Ascending aorta (tissue), 2 donors: ENCODE measurements at regions of chr6 and their contacts with region 1.

Region 1: GRCh38 chr6:17086469-17086868 is 15.4 kb upstream of the STMND1 start:
- DNase-seq: no peak
- H3K4me3 ChIP-seq: no peak overlapping the region
- H3K27ac ChIP-seq: no peak overlapping the region
- H3K4me1 ChIP-seq: no peaks in the 10 kb centered on the region
- H3K27me3 ChIP-seq: no peaks in the 10 kb centered on the region
- CTCF ChIP-seq: peak; percentile 51 to 61 (median 55)

Region 2: GRCh38 chr6:16514249-16514648 is 572.2 kb before region 1 on chr6:
- intact Hi-C with region 1: loop called (anchors 10 kb)
- DNase-seq: no peak
- H3K4me3 ChIP-seq: no peak overlapping the region
- H3K27ac ChIP-seq: no peak overlapping the region
- H3K4me1 ChIP-seq: peaks cover 3 to 20% of the 10 kb centered on the region in 2 donors
- H3K27me3 ChIP-seq: no peaks in the 10 kb centered on the region
- CTCF ChIP-seq: peak; percentile 37 to 54 (median 44)

Region 3: DNA sequence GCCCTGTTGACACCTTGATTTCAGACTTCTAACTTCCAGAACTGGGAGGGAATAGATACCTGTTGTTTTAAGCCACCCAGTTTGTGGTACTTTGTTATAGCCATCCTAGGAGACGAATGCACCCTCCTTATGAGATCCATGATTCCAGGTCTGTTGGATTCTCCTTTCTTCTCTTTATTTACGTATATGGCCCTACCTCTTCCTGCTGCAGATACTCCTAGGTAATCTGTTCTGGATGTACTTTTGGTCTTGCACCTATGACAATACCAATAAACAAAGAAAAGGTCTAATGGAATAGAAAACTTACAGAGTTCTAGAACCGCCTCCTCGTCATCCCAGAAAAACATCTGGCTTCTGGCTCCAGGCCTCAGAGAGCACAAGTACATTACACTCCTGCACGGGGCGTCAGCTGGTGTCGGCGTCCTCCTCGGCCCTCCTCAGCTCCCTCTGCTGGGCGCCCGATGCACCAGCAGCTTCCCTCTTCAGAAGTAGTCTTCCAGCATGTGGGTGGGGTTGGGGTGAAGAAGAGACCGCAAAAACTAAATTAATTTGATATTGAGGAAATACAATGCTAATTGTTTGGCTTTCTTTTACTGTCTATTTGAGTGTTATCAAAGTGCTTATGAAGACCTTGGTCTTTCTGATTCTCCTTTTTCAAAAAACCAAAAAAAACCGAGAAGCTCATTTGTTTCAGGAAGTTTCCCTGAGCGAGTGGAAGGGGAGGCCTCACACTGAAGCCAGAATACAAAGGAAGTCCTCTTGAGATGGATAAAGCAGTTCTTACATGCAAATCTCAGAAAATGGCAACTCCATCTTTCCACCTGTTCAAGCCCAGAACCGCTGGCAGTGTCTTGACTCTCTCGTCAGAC is 315.5 kb before region 1 on chr6:
- intact Hi-C with region 1: loop called (anchors 10 kb)
- DNase-seq: peak; percentile 22 to 86
- H3K4me3 ChIP-seq: no peak overlapping the region
- H3K27ac ChIP-seq: peak overlapping the region; percentile 32 to 51
- H3K4me1 ChIP-seq: peaks cover 6 to 25% of the 10 kb centered on the region in 2 donors
- H3K27me3 ChIP-seq: no peaks in the 10 kb centered on the region
- CTCF ChIP-seq: peak; percentile 79 to 90 (median 87)

Region 4: DNA sequence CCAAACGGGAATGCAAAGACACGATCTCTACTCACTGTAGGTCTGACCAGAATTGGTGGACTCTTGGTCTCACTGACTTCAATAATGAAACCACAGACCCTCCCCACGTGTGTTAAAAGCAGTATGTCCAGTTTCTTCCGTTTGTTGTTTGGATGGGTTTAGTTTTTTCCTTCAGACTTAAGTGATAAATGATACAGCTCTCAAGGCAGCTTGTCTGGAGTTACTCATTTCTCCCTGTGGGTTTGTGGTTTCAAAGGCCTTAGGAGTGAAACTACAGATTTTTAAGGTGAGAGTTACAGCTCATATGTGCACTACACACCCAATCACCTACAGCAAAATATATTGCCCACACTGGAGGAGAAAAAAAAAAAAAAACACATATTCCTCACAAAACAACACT is 71.3 kb before region 1 on chr6:
- intact Hi-C with region 1: loop called (anchors 10 kb)
- DNase-seq: no peak
- H3K4me3 ChIP-seq: no peak overlapping the region
- H3K27ac ChIP-seq: no peak overlapping the region
- H3K4me1 ChIP-seq: peaks cover 0 to 3% of the 10 kb centered on the region in 2 donors
- H3K27me3 ChIP-seq: no peaks in the 10 kb centered on the region
- CTCF ChIP-seq: no peak